Activated B cell treated with CpG ODN at 0.5 μM for 24 hours (primary cell): ENCODE measurements at regions of chr2 and their contacts with region 1.

Region 1: DNA sequence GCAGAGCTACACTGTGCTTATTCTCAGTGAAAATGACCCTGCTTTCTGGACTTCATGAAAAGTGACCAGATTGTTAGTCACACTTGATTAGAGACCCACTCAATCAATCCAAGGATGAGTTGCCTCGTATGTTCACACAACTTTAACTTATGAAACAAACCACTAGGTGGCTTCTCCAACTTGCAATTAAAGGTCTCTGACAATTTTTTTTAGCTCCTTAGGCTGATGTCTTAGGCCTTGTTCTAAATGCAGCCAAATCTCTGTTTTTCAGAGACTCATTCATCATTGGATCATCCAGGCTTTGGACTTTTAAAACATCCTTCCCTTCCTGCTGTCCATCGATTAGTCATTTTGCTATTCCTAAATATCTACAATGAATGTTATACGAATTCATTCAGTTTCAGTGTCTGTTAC is 63.4 kb downstream of the MREG start:
- DNase-seq: no peak
- ATAC-seq: no peak
- H3K4me3 Mint-ChIP-seq: no peak overlapping the region
- H3K27ac Mint-ChIP-seq: no peak overlapping the region
- H3K4me1 Mint-ChIP-seq: no peaks in the 10 kb centered on the region
- H3K27me3 Mint-ChIP-seq: no peaks in the 10 kb centered on the region
- CTCF ChIP-seq: no peak

Region 2: DNA sequence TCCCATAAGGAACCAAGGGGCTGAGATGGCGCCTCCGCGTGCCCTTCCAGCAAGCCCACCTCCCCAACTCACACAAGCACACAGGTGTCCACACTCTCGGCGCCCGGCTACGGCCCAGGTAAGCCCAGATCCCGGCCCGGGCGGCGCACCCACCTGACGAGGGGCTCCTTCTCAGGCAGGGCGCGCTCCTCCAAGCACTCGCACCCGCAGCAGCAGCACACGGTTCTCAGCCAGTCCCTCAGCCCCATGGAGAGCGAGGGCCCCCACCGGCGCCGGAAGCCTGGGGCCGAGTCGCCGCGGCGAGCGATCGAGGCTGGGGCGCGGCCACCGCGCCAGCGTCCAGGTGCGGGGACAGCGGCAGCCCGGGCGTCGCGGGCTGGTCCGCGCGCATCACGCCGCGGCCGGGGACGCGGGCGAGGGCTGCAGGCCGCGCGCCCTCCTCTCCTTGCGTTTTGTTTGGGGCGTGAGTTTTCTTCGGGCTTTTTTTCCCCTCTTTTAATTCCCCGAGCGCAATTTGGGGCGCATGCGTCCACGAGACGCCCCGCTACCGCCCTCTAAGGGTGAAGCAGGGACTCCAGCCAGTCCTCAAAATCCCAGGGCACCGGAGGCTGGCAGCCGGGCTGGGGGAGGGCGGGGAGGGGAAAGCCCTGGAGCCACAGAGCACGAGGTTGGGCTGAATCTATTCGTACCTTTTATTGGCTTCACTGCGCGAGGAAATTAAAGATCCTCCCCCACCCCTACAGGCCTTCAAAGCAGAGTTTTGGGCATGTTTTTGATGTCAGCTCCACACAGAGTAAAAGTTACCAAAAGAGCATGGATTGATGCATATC is 63.3 kb after region 1 on chr2 and contains the start of gene MREG:
- CTCF ChIA-PET with region 1: interaction called, 96 read pairs
- POLR2A ChIA-PET with region 1: no interaction called
- intact Hi-C with region 1: loop called (anchors 2 kb)
- DNase-seq: peak; percentile 79
- ATAC-seq: peak; percentile 84
- H3K4me3 Mint-ChIP-seq: peak within 1 kb of the TSS; percentile 89
- H3K27ac Mint-ChIP-seq: peak within 1 kb of the TSS; percentile 76
- H3K4me1 Mint-ChIP-seq: peaks cover 66% of the 10 kb centered on the region
- H3K27me3 Mint-ChIP-seq: no peaks in the 10 kb centered on the region
- CTCF ChIP-seq: no peak
- total RNA-seq, gene MREG: 16.2 and 16.6 TPM in 2 replicates

Region 3: GRCh38 chr2:216023055-216023648 is 73.2 kb after region 1 on chr2:
- CTCF ChIA-PET with region 1: interaction called, 96 read pairs
- POLR2A ChIA-PET with region 1: no interaction called
- intact Hi-C with region 1: loop called (anchors 1 kb)
- DNase-seq: no peak
- ATAC-seq: peak; percentile 49
- H3K4me3 Mint-ChIP-seq: no peak overlapping the region
- H3K27ac Mint-ChIP-seq: no peak overlapping the region
- H3K4me1 Mint-ChIP-seq: no peaks in the 10 kb centered on the region
- H3K27me3 Mint-ChIP-seq: no peaks in the 10 kb centered on the region
- CTCF ChIP-seq: no peak

Region 4: GRCh38 chr2:216222650-216223352 is 272.8 kb after region 1 on chr2:
- CTCF ChIA-PET with region 1: no interaction called
- POLR2A ChIA-PET with region 1: no interaction called
- intact Hi-C with region 1: no loop called
- DNase-seq: peak; percentile 37
- ATAC-seq: peak; percentile 80
- H3K4me3 Mint-ChIP-seq: peak overlapping the region; percentile 64
- H3K27ac Mint-ChIP-seq: peak overlapping the region; percentile 97
- H3K4me1 Mint-ChIP-seq: peaks cover 25% of the 10 kb centered on the region
- H3K27me3 Mint-ChIP-seq: no peaks in the 10 kb centered on the region
- CTCF ChIP-seq: no peak

Region 5: DNA sequence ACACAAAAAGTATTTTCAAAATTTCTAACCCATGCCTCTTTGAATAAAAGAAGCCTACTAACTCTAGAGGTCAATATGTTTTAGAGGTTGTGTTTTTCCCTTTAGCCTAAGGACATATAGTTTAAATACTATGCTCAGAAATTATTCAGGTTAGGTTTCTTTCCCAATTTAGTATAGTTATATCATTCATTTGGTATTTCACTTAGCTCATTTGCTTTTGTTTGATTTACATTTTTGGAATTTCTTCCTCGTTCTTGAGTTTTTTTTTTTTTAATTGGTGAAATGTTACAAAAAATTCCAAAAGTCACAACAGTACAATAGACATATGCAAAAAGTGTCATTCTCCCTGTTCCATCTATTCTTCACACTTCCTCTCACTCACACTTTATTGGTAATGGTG is 1281.2 kb after region 1 on chr2:
- CTCF ChIA-PET with region 1: no interaction called
- POLR2A ChIA-PET with region 1: no interaction called
- intact Hi-C with region 1: no loop called
- DNase-seq: no peak
- ATAC-seq: no peak
- H3K4me3 Mint-ChIP-seq: no peak overlapping the region
- H3K27ac Mint-ChIP-seq: no peak overlapping the region
- H3K4me1 Mint-ChIP-seq: no peaks in the 10 kb centered on the region
- H3K27me3 Mint-ChIP-seq: peaks cover 40% of the 10 kb centered on the region
- CTCF ChIP-seq: no peak